Activated CD4-positive, alpha-beta T cell treated with anti-CD3 and anti-CD28 coated beads, Interleukin-2, amount 10 ng/mL, durations not matched to agents 24 days and 14 days (primary cell): ENCODE measurements at regions of chr1 and their contacts with region 1.

Region 1: GRCh38 chr1:210407207-210407886 is 78.6 kb downstream of the HHAT start:
- DNase-seq: peak; percentile 91
- H3K4me3 Mint-ChIP-seq: no peak overlapping the region
- H3K27ac Mint-ChIP-seq: no peak overlapping the region
- H3K4me1 Mint-ChIP-seq: no peaks in the 10 kb centered on the region
- H3K27me3 Mint-ChIP-seq: peaks cover 10% of the 10 kb centered on the region

Region 2: DNA sequence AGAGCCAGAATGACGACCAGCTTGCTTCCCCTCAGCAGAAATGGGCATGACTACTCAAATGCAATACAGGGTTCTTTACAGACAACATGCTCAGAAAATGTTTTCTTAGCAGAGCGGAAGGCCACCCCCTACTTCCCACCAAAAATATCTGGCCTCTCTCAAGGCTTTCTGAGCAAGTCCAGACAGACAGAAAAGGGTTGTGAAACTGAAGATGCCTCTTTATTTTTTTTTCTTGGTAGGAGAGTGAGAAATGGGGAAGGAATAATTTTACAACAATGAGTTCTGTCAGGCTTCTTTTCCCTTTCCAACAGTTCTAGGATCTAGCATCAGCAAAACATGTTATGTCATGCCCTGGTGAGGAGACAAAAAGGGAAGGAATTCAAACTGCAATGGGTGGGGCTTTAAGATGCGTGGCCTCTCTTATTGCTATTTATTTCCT is 995.8 kb before region 1 on chr1:
- intact Hi-C with region 1: no loop called
- DNase-seq: no peak
- H3K4me3 Mint-ChIP-seq: no peak overlapping the region
- H3K27ac Mint-ChIP-seq: no peak overlapping the region
- H3K4me1 Mint-ChIP-seq: no peaks in the 10 kb centered on the region
- H3K27me3 Mint-ChIP-seq: peaks cover 18% of the 10 kb centered on the region

Region 3: DNA sequence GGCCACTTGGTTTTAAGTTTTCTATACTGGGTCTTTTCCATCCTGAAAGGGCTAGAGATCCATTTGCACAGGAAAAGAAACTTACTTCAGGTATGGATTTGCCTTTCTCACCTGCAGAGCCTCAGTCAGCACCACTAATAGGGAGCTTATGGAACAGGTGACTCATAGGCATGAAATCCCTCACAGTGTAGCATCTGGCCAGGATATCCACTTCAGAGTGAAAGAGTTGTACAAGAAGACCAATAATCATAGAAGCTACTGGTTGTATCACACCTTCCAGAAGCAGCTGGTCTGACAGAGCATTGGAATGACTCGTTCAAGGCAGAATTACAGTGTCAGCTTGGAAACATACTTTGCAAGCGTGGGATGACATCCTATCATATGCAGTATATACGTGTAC is 495.6 kb before region 1 on chr1:
- intact Hi-C with region 1: no loop called
- DNase-seq: no peak
- H3K4me3 Mint-ChIP-seq: no peak overlapping the region
- H3K27ac Mint-ChIP-seq: no peak overlapping the region
- H3K4me1 Mint-ChIP-seq: no peaks in the 10 kb centered on the region
- H3K27me3 Mint-ChIP-seq: peaks cover 2% of the 10 kb centered on the region

Region 4: DNA sequence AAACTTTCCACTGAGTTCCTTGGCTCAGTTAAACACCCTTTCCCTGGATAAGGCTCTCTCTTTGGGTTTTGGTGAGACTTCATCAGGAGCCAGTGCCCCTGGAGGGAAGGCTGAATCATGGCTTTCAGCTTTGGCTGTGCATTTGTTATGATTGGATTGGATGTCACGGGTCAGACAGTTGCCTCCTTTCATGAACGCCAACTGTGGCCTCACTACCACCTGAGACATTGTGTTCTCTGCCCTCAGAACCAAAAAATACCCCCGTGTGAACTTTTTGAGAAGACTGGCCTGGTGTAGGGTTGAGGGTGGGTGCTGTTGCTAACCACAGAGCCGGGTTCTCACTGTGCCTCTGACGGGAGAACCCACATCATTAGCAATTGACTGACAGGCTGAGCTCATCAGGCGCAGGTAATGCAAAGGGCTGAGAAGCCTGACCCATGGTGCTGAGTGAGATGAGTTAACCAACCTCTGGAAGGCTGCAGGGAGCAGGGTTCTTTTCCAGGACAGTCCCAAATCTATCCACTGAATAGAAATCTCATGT is 13.0 kb before region 1 on chr1:
- intact Hi-C with region 1: no loop called
- DNase-seq: no peak
- H3K4me3 Mint-ChIP-seq: no peak overlapping the region
- H3K27ac Mint-ChIP-seq: no peak overlapping the region
- H3K4me1 Mint-ChIP-seq: peaks cover 9% of the 10 kb centered on the region
- H3K27me3 Mint-ChIP-seq: peaks cover 17% of the 10 kb centered on the region

Region 5: GRCh38 chr1:210584439-210585113 is 177.2 kb after region 1 on chr1:
- intact Hi-C with region 1: loop called (anchors 1 kb)
- DNase-seq: peak; percentile 89
- H3K4me3 Mint-ChIP-seq: no peak overlapping the region
- H3K27ac Mint-ChIP-seq: no peak overlapping the region
- H3K4me1 Mint-ChIP-seq: no peaks in the 10 kb centered on the region
- H3K27me3 Mint-ChIP-seq: peaks cover 3% of the 10 kb centered on the region

Region 6: GRCh38 chr1:210951279-210951678 is 543.9 kb after region 1 on chr1:
- intact Hi-C with region 1: loop called (anchors 2 kb)
- DNase-seq: no peak
- H3K4me3 Mint-ChIP-seq: no peak overlapping the region
- H3K27ac Mint-ChIP-seq: no peak overlapping the region
- H3K4me1 Mint-ChIP-seq: no peaks in the 10 kb centered on the region
- H3K27me3 Mint-ChIP-seq: peaks cover 2% of the 10 kb centered on the region

Region 7: GRCh38 chr1:211654838-211655787 is 1247.8 kb after region 1 on chr1:
- intact Hi-C with region 1: loop called (anchors 1 kb)
- DNase-seq: peak; percentile 94
- H3K4me3 Mint-ChIP-seq: no peak overlapping the region
- H3K27ac Mint-ChIP-seq: no peak overlapping the region
- H3K4me1 Mint-ChIP-seq: peaks cover 6% of the 10 kb centered on the region
- H3K27me3 Mint-ChIP-seq: peaks cover 10% of the 10 kb centered on the region